CD8-positive, alpha-beta T cell (primary cell): ENCODE measurements at regions of chr7 and their contacts with region 1.

Region 1: DNA sequence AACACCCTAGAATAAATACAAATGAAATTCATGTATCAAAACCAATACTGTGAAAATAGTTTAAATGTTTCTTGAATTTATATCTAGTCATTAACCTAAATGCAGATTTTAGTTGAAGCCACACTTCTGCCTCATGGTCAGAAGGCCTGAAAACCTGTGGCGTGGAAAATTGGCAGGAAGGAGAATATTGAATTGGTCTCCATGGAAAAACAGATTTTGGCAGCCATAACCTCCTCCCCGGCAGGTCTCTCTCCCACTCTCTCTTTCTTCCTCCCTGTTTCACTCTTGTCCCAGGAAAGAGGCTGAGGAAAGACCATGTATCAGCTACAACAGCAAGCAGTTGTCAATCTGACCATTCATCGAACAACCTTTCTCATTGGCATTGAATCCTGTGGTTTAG is 160.6 kb upstream of the YAE1 start:
- DNase-seq: no peak
- ATAC-seq: no peak
- H3K4me3 ChIP-seq: no peak overlapping the region
- H3K4me3 Mint-ChIP-seq: no peak overlapping the region
- H3K27ac ChIP-seq: no peak overlapping the region
- H3K27ac Mint-ChIP-seq: no peak overlapping the region
- H3K4me1 ChIP-seq: no peaks in the 10 kb centered on the region
- H3K4me1 Mint-ChIP-seq: no peaks in the 10 kb centered on the region
- H3K27me3 ChIP-seq: no peaks in the 10 kb centered on the region
- H3K27me3 Mint-ChIP-seq: no peaks in the 10 kb centered on the region
- CTCF ChIP-seq: no peak

Region 2: GRCh38 chr7:38585572-38586354 is 819.8 kb before region 1 on chr7:
- CTCF ChIA-PET with region 1: no interaction called
- POLR2A ChIA-PET with region 1: no interaction called
- intact Hi-C with region 1: no loop called
- DNase-seq: no peak
- ATAC-seq: no peak
- H3K4me3 ChIP-seq: no peak overlapping the region
- H3K4me3 Mint-ChIP-seq: no peak overlapping the region
- H3K27ac ChIP-seq: no peak overlapping the region
- H3K27ac Mint-ChIP-seq: no peak overlapping the region
- H3K4me1 ChIP-seq: no peaks in the 10 kb centered on the region
- H3K4me1 Mint-ChIP-seq: no peaks in the 10 kb centered on the region
- H3K27me3 ChIP-seq: no peaks in the 10 kb centered on the region
- H3K27me3 Mint-ChIP-seq: peaks cover 7% of the 10 kb centered on the region
- CTCF ChIP-seq: no peak

Region 3: DNA sequence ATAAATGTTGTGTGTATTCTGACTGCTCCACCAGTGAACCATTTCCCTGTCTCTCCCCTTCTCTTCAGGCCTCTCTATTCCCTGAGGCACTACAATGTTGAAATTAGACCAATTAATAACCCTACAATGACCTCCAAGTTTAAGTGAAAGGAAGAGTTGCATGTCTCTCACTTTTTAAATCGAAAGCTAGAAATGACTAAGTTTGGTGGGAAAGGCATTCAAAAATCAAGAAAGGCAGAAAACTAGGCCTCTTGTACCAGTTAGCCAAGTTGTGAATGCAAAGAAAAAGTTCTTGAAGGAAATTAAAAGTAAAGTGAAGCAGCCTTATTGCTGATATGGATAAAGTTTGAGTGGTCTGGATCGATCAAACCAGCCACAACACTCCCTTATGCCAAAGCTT is 37.6 kb before region 1 on chr7:
- CTCF ChIA-PET with region 1: no interaction called
- POLR2A ChIA-PET with region 1: no interaction called
- intact Hi-C with region 1: no loop called
- DNase-seq: no peak
- ATAC-seq: no peak
- H3K4me3 ChIP-seq: no peak overlapping the region
- H3K4me3 Mint-ChIP-seq: no peak overlapping the region
- H3K27ac ChIP-seq: no peak overlapping the region
- H3K27ac Mint-ChIP-seq: no peak overlapping the region
- H3K4me1 ChIP-seq: no peaks in the 10 kb centered on the region
- H3K4me1 Mint-ChIP-seq: no peaks in the 10 kb centered on the region
- H3K27me3 ChIP-seq: no peaks in the 10 kb centered on the region
- H3K27me3 Mint-ChIP-seq: peaks cover 15% of the 10 kb centered on the region
- CTCF ChIP-seq: no peak

Region 4: DNA sequence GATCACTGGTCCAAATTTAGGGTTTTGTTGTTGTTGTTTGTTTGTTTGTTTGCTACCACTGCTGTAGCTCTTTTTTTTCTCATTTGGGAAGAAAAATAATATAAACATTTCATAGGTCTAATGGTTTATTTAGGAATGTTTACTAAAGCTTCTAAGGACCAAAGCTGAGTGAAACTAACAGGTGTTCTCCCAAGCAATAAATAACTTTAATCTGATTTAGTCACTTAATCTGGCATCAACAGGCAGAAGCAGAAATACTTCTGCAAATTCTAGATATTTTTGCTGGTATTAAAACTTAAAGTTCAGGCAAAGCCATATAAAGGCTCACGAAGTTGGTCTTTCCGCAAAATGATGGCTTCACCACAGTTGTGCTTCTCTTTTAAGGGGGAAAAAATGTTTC is 16.1 kb after region 1 on chr7:
- CTCF ChIA-PET with region 1: no interaction called
- POLR2A ChIA-PET with region 1: no interaction called
- intact Hi-C with region 1: loop called in 1 of 2 experiments (anchors 2 kb)
- DNase-seq: no peak
- ATAC-seq: no peak
- H3K4me3 ChIP-seq: no peak overlapping the region
- H3K4me3 Mint-ChIP-seq: no peak overlapping the region
- H3K27ac ChIP-seq: no peak overlapping the region
- H3K27ac Mint-ChIP-seq: no peak overlapping the region
- H3K4me1 ChIP-seq: no peaks in the 10 kb centered on the region
- H3K4me1 Mint-ChIP-seq: no peaks in the 10 kb centered on the region
- H3K27me3 ChIP-seq: no peaks in the 10 kb centered on the region
- H3K27me3 Mint-ChIP-seq: peaks cover 21% of the 10 kb centered on the region
- CTCF ChIP-seq: no peak